CD4-positive, alpha-beta T cell (primary cell): ENCODE measurements at regions of chr2 and their contacts with region 1.

Region 1: GRCh38 chr2:191677646-191678436 is at the start of gene NABP1:
- DNase-seq: peak; percentile 98 to 100 (median 99)
- ATAC-seq: peak; percentile 86
- H3K4me3 ChIP-seq: peak within 1 kb of the TSS; percentile 78
- H3K4me3 Mint-ChIP-seq: peak within 1 kb of the TSS; percentile 97
- H3K27ac ChIP-seq: peak within 1 kb of the TSS; percentile 90 to 94
- H3K27ac Mint-ChIP-seq: peak within 1 kb of the TSS; percentile 100
- H3K4me1 ChIP-seq: peaks cover 44% of the 10 kb centered on the region
- H3K4me1 Mint-ChIP-seq: peaks cover 75% of the 10 kb centered on the region
- H3K27me3 ChIP-seq: no peaks in the 10 kb centered on the region
- H3K27me3 Mint-ChIP-seq: no peaks in the 10 kb centered on the region
- CTCF ChIP-seq: no peak
- total RNA-seq, gene NABP1: 32.0 to 32.9 TPM

Region 2: GRCh38 chr2:189783927-189784867 is 1893.6 kb before region 1 on chr2 and contains the starts of genes ORMDL1 and PMS1:
- CTCF ChIA-PET with region 1: no interaction called
- POLR2A ChIA-PET with region 1: no interaction called
- intact Hi-C with region 1: loop called in 1 of 2 experiments (anchors 5 kb)
- DNase-seq: peak; percentile 84 to 98 (median 92)
- ATAC-seq: peak; percentile 91
- H3K4me3 ChIP-seq: peak within 1 kb of the TSS; percentile 84
- H3K4me3 Mint-ChIP-seq: peak within 1 kb of the TSS; percentile 99
- H3K27ac ChIP-seq: peak within 1 kb of the TSS; percentile 90 to 93
- H3K27ac Mint-ChIP-seq: peak within 1 kb of the TSS; percentile 99
- H3K4me1 ChIP-seq: peaks cover 23% of the 10 kb centered on the region
- H3K4me1 Mint-ChIP-seq: peaks cover 58% of the 10 kb centered on the region
- H3K27me3 ChIP-seq: no peaks in the 10 kb centered on the region
- H3K27me3 Mint-ChIP-seq: no peaks in the 10 kb centered on the region
- CTCF ChIP-seq: no peak
- total RNA-seq, gene ORMDL1: 104 to 106 TPM
- total RNA-seq, gene PMS1: 9.6 to 9.8 TPM

Region 3: GRCh38 chr2:191020221-191020741 is 657.6 kb before region 1 on chr2:
- CTCF ChIA-PET with region 1: no interaction called
- POLR2A ChIA-PET with region 1: interaction called, 7 read pairs
- intact Hi-C with region 1: loop called in 1 of 2 experiments (anchors 10 kb)
- DNase-seq: peak; percentile 84 to 98 (median 92)
- ATAC-seq: peak; percentile 73
- H3K4me3 ChIP-seq: peak overlapping the region; percentile 82
- H3K4me3 Mint-ChIP-seq: no peak overlapping the region
- H3K27ac ChIP-seq: peak overlapping the region; percentile 84 to 87
- H3K27ac Mint-ChIP-seq: no peak overlapping the region
- H3K4me1 ChIP-seq: peaks cover 54% of the 10 kb centered on the region
- H3K4me1 Mint-ChIP-seq: peaks cover 32% of the 10 kb centered on the region
- H3K27me3 ChIP-seq: no peaks in the 10 kb centered on the region
- H3K27me3 Mint-ChIP-seq: no peaks in the 10 kb centered on the region
- CTCF ChIP-seq: no peak

Region 4: DNA sequence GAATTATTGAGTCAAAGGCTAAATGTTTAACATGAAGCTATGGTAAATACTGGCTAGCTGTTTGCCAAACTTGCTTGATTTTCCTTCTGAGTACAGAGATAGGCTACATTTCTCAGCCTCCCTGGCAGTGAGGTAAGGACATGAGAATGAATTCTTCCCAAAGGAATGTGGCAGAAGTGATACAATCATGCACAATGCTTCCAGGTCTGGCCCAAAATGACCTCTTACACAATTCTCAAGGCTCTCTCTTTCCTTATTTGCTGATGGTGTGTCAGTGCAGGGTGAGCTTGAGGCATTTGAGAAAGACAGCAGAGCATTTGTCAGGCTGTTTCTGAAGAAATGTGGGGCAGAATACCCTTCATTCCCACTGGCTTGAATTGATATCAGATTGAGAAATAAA is 95.5 kb before region 1 on chr2:
- CTCF ChIA-PET with region 1: no interaction called
- POLR2A ChIA-PET with region 1: interaction called, 14 read pairs
- intact Hi-C with region 1: no loop called
- DNase-seq: no peak
- ATAC-seq: no peak
- H3K4me3 ChIP-seq: no peak overlapping the region
- H3K4me3 Mint-ChIP-seq: no peak overlapping the region
- H3K27ac ChIP-seq: no peak overlapping the region
- H3K27ac Mint-ChIP-seq: no peak overlapping the region
- H3K4me1 ChIP-seq: no peaks in the 10 kb centered on the region
- H3K4me1 Mint-ChIP-seq: no peaks in the 10 kb centered on the region
- H3K27me3 ChIP-seq: no peaks in the 10 kb centered on the region
- H3K27me3 Mint-ChIP-seq: no peaks in the 10 kb centered on the region
- CTCF ChIP-seq: no peak

Region 5: GRCh38 chr2:191625016-191625415 is 52.8 kb before region 1 on chr2:
- CTCF ChIA-PET with region 1: no interaction called
- POLR2A ChIA-PET with region 1: interaction called, 276 read pairs
- intact Hi-C with region 1: loop called in 1 of 2 experiments (anchors 2 kb)
- DNase-seq: peak in 13 of 14 experiments; percentile 19 to 91 (median 39)
- ATAC-seq: peak; percentile 86
- H3K4me3 ChIP-seq: no peak overlapping the region
- H3K4me3 Mint-ChIP-seq: no peak overlapping the region
- H3K27ac ChIP-seq: peak overlapping the region in 1 of 2 donors; percentile 52
- H3K27ac Mint-ChIP-seq: peak overlapping the region; percentile 73
- H3K4me1 ChIP-seq: peaks cover 34% of the 10 kb centered on the region
- H3K4me1 Mint-ChIP-seq: peaks cover 83% of the 10 kb centered on the region
- H3K27me3 ChIP-seq: no peaks in the 10 kb centered on the region
- H3K27me3 Mint-ChIP-seq: no peaks in the 10 kb centered on the region
- CTCF ChIP-seq: no peak

Region 6: DNA sequence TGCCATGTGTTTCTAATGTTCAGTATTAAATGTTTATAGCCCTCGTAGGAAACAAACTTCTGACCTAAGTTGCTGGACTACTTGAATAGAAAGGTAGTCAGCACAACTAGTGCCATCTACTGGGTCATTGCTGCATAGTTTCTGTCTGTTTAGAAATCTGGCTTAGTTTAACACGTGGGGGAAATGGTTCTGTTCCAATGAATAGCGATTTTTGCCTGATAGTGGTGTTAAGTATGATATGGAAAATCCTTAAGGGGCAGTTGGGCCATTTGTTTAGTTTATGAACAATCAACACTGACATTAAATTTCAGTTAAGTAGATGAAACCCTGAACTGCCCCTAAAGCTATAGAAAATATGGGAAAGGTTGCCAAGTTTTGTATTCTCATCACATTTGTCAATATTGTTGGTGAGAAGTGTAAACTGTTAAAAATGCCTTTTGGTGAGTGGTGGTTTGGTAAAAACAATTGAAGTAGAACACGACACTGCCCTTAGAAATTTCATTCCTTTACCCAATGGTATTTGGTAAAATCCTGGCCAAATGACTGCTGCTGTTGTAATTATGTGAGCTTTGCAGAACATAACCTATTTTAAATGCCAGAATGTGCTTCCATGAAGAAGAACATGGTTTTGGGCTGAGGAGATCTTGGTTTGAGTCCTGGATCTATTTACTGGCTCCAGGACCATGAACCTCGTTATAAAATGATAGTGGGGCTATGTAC is 13.3 kb after region 1 on chr2:
- CTCF ChIA-PET with region 1: interaction called, 4 read pairs
- POLR2A ChIA-PET with region 1: interaction called, 36 read pairs
- intact Hi-C with region 1: no loop called
- DNase-seq: peak in 11 of 14 experiments; percentile 13 to 85 (median 39)
- ATAC-seq: peak; percentile 93
- H3K4me3 ChIP-seq: no peak overlapping the region
- H3K4me3 Mint-ChIP-seq: no peak overlapping the region
- H3K27ac ChIP-seq: no peak overlapping the region
- H3K27ac Mint-ChIP-seq: peak overlapping the region; percentile 44
- H3K4me1 ChIP-seq: no peaks in the 10 kb centered on the region
- H3K4me1 Mint-ChIP-seq: peaks cover 19% of the 10 kb centered on the region
- H3K27me3 ChIP-seq: no peaks in the 10 kb centered on the region
- H3K27me3 Mint-ChIP-seq: no peaks in the 10 kb centered on the region
- CTCF ChIP-seq: peak; percentile 87